IMR-90 (cell line): ENCODE measurements at regions of chr21 and their contacts with region 1.

Region 1: DNA sequence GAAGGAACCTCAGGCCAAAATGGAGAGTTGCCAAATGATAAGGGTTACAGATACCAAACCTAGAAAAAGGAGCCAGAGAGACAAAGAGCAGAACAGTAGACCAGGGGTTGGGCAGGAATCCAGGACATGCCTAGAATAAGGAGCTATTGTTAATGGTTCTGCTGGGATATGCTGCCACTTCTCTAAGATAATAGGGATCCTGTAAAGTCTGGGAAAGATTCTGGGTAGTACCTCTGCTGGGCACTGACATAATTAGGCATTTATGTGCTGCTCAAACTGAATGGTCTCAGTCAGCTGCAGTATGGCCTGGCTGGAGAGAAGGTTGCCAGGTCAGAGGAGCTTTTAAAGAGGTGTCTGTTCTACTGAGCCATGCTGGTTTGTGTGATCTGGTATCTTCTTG is 19.9 kb upstream of the NRIP1 start:
- DNase-seq: no peak
- ATAC-seq: no peak
- H3K4me3 ChIP-seq: no peak overlapping the region
- H3K27ac ChIP-seq: no peak overlapping the region
- H3K4me1 ChIP-seq: no peaks in the 10 kb centered on the region
- H3K27me3 ChIP-seq: no peaks in the 10 kb centered on the region
- CTCF ChIP-seq: no peak
- POLR2A ChIP-seq: no peak
- RAD21 ChIP-seq: no peak

Region 2: DNA sequence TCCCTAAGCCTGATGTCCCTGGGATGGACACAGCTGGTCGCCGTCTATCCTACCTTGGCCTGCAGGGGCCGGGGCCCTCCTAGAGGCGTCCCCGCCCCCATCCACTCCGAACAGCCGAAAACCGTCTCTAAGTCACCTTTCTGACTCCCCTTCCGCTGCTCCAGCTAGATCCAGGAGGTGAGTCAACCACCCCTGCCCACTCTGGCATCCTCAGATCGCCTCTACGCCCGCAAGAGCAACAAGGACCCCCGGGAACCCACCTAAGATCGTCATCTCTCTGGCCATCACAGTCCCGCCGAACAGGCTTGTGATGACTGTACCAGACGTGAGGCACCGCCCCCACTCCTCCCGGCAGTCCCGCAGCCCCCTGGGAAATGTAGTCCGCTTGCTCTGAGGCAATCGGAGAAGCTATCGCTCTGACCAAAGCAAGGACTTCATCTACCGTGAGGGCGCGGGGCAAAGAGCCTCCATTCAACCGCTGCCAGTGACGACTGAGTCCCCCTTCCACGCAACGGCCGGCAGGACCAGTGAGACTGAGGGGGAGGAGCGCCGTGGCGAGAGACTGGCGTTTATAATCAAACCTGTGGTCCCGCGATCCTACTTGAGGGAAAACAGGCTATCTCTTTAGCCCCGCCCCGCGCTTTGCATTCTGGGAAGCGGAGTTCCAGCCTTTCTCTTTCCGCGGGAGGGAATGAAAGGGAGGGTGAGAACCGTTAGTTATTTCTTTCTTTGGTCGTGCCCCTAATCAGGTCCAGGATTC is 701.7 kb before region 1 on chr21 and contains the start of gene HSPA13:
- CTCF ChIA-PET with region 1: no interaction called
- POLR2A ChIA-PET with region 1: no interaction called
- dilution Hi-C with region 1: no loop called
- in situ Hi-C with region 1: loop called (anchors 25 kb)
- intact Hi-C with region 1: no loop called
- DNase-seq: peak; percentile 99
- ATAC-seq: peak; percentile 97
- H3K4me3 ChIP-seq: peak within 1 kb of the TSS; percentile 72
- H3K27ac ChIP-seq: peak within 1 kb of the TSS; percentile 78
- H3K4me1 ChIP-seq: no peaks in the 10 kb centered on the region
- H3K27me3 ChIP-seq: no peaks in the 10 kb centered on the region
- CTCF ChIP-seq: 0 out of 2 replicates have a peak, but pooled peaks have one; percentile 12
- POLR2A ChIP-seq: peak; percentile 90
- RAD21 ChIP-seq: no peak
- total RNA-seq, gene HSPA13: 43.7 and 68.9 TPM in 2 replicates

Region 3: DNA sequence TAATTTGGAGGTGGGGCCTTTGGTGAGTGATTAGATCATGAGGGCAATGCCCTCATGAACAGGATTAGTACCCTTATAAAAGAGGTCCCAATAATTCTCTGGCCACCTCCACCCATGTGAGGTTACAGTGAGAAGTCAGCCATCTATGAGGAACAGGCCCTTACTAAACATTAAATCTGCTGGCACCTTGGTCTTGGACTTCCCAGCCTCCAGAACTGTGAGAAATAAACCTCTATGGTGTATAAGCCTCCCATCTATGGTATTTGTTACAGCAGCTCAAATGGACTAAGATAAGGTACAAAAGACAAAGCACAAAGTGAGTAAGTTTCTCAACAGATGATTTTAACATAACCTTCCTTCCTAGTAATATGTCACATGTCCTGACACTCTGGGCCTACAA is 42.1 kb before region 1 on chr21:
- CTCF ChIA-PET with region 1: no interaction called
- POLR2A ChIA-PET with region 1: no interaction called
- dilution Hi-C with region 1: no loop called
- in situ Hi-C with region 1: no loop called
- intact Hi-C with region 1: no loop called
- DNase-seq: no peak
- ATAC-seq: no peak
- H3K4me3 ChIP-seq: no peak overlapping the region
- H3K27ac ChIP-seq: no peak overlapping the region
- H3K4me1 ChIP-seq: peaks cover 3% of the 10 kb centered on the region; the same call in 1 of the 2 replicates
- H3K27me3 ChIP-seq: no peaks in the 10 kb centered on the region
- CTCF ChIP-seq: no peak
- POLR2A ChIP-seq: no peak
- RAD21 ChIP-seq: no peak